Mammary epithelial cell (primary cell): ENCODE measurements at regions of chr4 and their contacts with region 1.

Region 1: GRCh38 chr4:45550766-45551366 is 573.0 kb downstream of the GABRG1 start:
- DNase-seq: no peak
- H3K4me3 ChIP-seq: no peak overlapping the region
- H3K27ac ChIP-seq: no peak overlapping the region
- H3K4me1 ChIP-seq: no peaks in the 10 kb centered on the region
- H3K27me3 ChIP-seq: no peaks in the 10 kb centered on the region
- CTCF ChIP-seq: no peak

Region 2: GRCh38 chr4:45580334-45580733 is 29.5 kb after region 1 on chr4:
- CTCF ChIA-PET with region 1: no interaction called
- dilution Hi-C with region 1: loop called (anchors 5 kb)
- in situ Hi-C with region 1: no loop called
- intact Hi-C with region 1: no loop called
- DNase-seq: no peak
- H3K4me3 ChIP-seq: no peak overlapping the region
- H3K27ac ChIP-seq: no peak overlapping the region
- H3K4me1 ChIP-seq: no peaks in the 10 kb centered on the region
- H3K27me3 ChIP-seq: no peaks in the 10 kb centered on the region
- CTCF ChIP-seq: no peak

Region 3: GRCh38 chr4:45662997-45663396 is 112.1 kb after region 1 on chr4:
- CTCF ChIA-PET with region 1: no interaction called
- dilution Hi-C with region 1: no loop called
- in situ Hi-C with region 1: no loop called
- intact Hi-C with region 1: no loop called
- DNase-seq: peak; percentile 48
- H3K4me3 ChIP-seq: no peak overlapping the region
- H3K27ac ChIP-seq: no peak overlapping the region
- H3K4me1 ChIP-seq: no peaks in the 10 kb centered on the region
- H3K27me3 ChIP-seq: peaks cover 2% of the 10 kb centered on the region
- CTCF ChIP-seq: no peak

Region 4: GRCh38 chr4:46270986-46271596 is 720.2 kb after region 1 on chr4:
- CTCF ChIA-PET with region 1: no interaction called
- dilution Hi-C with region 1: no loop called
- in situ Hi-C with region 1: no loop called
- intact Hi-C with region 1: loop called (anchors 5 kb)
- DNase-seq: peak; percentile 21
- H3K4me3 ChIP-seq: no peak overlapping the region
- H3K27ac ChIP-seq: no peak overlapping the region
- H3K4me1 ChIP-seq: no peaks in the 10 kb centered on the region
- H3K27me3 ChIP-seq: no peaks in the 10 kb centered on the region
- CTCF ChIP-seq: peak; percentile 46 to 58

Region 5: GRCh38 chr4:46947005-46947404 is 1396.1 kb after region 1 on chr4:
- CTCF ChIA-PET with region 1: no interaction called
- dilution Hi-C with region 1: no loop called
- in situ Hi-C with region 1: no loop called
- intact Hi-C with region 1: no loop called
- DNase-seq: no peak
- H3K4me3 ChIP-seq: no peak overlapping the region
- H3K27ac ChIP-seq: no peak overlapping the region
- H3K4me1 ChIP-seq: no peaks in the 10 kb centered on the region
- H3K27me3 ChIP-seq: no peaks in the 10 kb centered on the region
- CTCF ChIP-seq: no peak